ENCODE measurements at regions of chr1 and their contacts with region 1.

Region 1: GRCh38 chr1:175035865-175036264 is 12.6 kb upstream of the MRPS14 start:
- DNase-seq: no peak
- ATAC-seq: no peak
- H3K4me3 ChIP-seq: no peak overlapping the region
- H3K27ac ChIP-seq: no peak overlapping the region
- H3K4me1 ChIP-seq: no peaks in the 10 kb centered on the region
- H3K27me3 ChIP-seq: no peaks in the 10 kb centered on the region
- CTCF ChIP-seq: no peak

Region 2: DNA sequence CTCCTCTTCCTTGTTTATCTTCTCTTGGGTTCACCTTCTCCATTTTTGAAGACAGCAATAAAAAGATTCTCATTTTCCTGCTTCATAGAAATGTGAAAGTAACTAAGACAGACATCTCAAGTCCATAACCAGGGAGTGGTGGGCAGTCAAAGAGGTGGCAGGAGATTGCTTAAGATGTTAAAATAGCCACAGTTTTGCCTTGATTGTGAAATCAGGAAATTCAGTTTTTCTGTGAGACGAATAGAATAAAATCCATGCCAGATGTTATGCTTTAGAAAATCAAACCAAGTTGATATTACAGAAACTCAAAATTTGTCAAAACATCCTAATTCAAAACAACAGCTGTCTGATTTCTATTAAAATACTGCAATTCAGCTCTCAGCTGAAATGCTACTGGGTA is 89.0 kb after region 1 on chr1:
- intact Hi-C with region 1: loop called in 8 of 10 experiments (anchors 1 to 5 kb)
- DNase-seq: no peak
- ATAC-seq: no peak
- H3K4me3 ChIP-seq: peak overlapping the region in 2 of 10 donors; percentile 5 to 7
- H3K27ac ChIP-seq: peak overlapping the region in 5 of 10 donors; percentile 1 to 56 (median 31)
- H3K4me1 ChIP-seq: peaks cover 0 to 44% (median 24%) of the 10 kb centered on the region in 9 donors
- H3K27me3 ChIP-seq: no peaks in the 10 kb centered on the region
- CTCF ChIP-seq: no peak

Region 3: DNA sequence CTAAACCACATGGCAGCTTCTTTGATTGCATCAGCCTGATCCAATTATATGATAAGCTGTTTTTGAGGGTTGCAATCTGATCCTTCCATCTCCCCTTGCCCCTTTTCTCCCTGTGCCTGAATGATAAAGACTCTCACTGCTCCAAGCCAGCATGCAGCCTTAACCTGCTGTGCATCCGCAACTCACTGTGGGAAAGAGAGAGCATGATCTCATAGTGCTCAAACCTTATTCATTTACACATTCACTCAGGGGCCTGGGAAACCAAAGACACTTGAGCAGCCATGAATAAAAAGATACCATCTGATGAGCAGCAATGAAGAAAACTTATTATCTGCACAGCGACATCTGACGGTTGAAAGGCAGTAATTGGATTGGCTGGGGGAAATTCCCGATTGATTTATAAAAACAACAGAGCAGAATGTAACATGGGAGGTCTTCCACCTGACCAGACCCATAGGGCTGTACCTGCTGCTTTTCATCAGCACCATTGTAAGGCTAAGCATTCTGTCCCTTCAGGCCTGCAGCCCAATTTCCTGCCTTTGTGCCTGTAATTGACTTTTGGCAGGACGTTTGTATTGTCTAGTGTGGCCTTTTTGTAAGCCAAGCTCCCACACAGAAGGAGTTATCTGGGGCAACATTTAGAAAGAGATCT is 94.3 kb after region 1 on chr1:
- intact Hi-C with region 1: loop called in 6 of 10 experiments (anchors 1 to 5 kb)
- DNase-seq: peak in 1 of 2 donors; percentile 37
- ATAC-seq: peak; percentile 43 to 88 (median 80)
- H3K4me3 ChIP-seq: no peak overlapping the region
- H3K27ac ChIP-seq: peak overlapping the region in 8 of 10 donors; percentile 5 to 79 (median 34)
- H3K4me1 ChIP-seq: peaks cover 2 to 66% (median 41%) of the 10 kb centered on the region in 9 donors
- H3K27me3 ChIP-seq: no peaks in the 10 kb centered on the region
- CTCF ChIP-seq: peak in 1 of 9 donors; percentile 19

Region 4: DNA sequence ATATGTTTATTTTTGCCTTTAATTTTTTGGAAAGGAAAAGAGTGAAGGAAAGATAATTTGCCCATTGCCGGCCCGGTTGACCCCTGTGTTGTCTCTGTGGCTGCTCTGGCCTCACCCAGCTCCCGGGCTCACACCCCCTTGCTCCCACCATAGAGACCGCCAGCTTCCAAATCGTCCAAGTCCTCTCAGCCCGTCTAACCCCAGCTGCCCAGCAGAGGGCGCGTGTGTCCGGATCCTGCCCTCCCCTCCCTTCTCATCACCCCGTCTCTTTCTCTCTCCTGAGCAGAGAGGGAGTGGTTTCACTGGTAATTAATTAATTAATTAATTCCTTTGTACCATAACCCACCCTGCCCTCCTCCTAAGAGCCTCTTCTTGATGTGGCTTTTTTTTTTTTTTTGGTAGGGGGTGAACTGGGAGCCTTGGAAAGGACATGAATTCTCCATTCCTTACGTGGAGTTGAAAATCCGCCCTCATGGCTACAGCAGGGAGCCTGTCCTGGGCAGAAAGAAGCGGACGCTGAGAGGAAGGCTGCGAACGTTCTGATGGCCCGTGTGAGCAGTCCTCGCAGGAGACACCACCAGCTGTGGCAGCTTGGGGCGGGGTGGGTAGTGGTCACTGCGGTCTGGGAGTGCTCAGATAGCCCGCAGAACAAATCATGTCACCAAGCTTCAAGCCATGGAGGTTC is 110.8 kb after region 1 on chr1:
- intact Hi-C with region 1: loop called in 1 of 10 experiments (anchors 5 kb)
- DNase-seq: peak; percentile 63 to 76
- ATAC-seq: peak; percentile 69 to 86 (median 84)
- H3K4me3 ChIP-seq: peak overlapping the region in 1 of 10 donors; percentile 9
- H3K27ac ChIP-seq: no peak overlapping the region
- H3K4me1 ChIP-seq: peaks cover 0 to 7% (median 0%) of the 10 kb centered on the region in 9 donors
- H3K27me3 ChIP-seq: peaks cover 0 to 3% (median 0%) of the 10 kb centered on the region in 7 donors
- CTCF ChIP-seq: peak; percentile 49 to 88 (median 81)